Common myeloid progenitor, CD34-positive (primary cell): ENCODE measurements at regions of chr7 and their contacts with region 1.

Region 1: DNA sequence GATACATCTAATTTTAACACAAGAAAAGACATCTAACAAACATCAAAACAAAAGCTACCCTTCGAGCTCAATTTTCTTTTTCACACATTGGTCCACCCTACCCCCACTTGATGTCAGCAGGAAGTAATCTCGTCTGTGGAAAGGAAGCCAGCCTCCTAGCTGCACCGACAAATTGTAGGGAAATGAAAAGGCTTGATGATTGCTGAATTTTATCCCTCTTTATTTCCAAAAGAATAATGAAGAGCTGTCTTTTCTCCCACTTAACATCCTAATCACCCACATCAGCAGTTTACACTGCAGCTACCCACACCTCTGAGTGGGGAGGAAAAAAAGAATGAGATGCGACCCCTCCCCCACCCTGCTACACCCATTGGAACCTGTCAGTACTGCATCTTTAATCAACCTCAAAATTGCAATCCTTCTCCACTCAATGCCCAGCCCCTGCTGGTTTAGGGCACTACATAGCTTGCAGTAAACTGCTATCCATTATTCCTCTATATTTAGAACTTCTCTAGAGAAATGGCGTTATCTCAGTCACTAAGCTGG is 10.6 kb upstream of the CPVL start:
- DNase-seq: peak in 2 of 3 donors; percentile 49 to 59
- H3K4me3 ChIP-seq: peak overlapping the region in 1 of 7 experiments; percentile 10
- H3K27ac ChIP-seq: no peak overlapping the region
- H3K4me1 ChIP-seq: peaks cover 0 to 14% (median 11%) of the 10 kb centered on the region in 4 experiments
- H3K27me3 ChIP-seq: no peaks in the 10 kb centered on the region

Region 2: DNA sequence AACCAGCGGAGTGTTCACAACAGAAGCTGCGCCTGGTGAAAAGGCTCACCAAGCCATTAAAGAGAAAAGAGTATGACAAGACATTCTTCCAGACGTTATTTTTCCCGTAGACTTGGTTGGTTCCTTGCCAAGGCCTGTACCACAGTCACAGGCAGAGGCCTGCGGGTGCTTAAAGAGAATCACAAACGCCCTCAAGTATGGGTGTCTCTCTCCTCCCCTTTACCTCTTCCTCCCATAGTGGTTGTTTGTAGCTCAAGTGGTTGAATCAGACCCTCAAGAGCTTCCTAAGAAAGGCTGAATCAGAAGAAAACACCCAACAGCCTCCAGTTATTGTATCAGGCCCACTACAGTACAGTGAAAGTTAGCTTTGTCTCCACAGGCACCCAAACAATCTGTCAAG is 575.6 kb before region 1 on chr7:
- CTCF ChIA-PET with region 1: no interaction called
- POLR2A ChIA-PET with region 1: no interaction called
- DNase-seq: no peak
- H3K4me3 ChIP-seq: no peak overlapping the region
- H3K27ac ChIP-seq: no peak overlapping the region
- H3K4me1 ChIP-seq: peaks cover 0 to 4% (median 0%) of the 10 kb centered on the region in 4 experiments
- H3K27me3 ChIP-seq: no peaks in the 10 kb centered on the region

Region 3: GRCh38 chr7:28768628-28769027 is 388.4 kb before region 1 on chr7:
- CTCF ChIA-PET with region 1: no interaction called
- POLR2A ChIA-PET with region 1: no interaction called
- DNase-seq: no peak
- H3K4me3 ChIP-seq: no peak overlapping the region
- H3K27ac ChIP-seq: no peak overlapping the region
- H3K4me1 ChIP-seq: no peaks in the 10 kb centered on the region
- H3K27me3 ChIP-seq: no peaks in the 10 kb centered on the region

Region 4: GRCh38 chr7:29146057-29146706 is 10.8 kb before region 1 on chr7 and contains the start of gene CPVL:
- CTCF ChIA-PET with region 1: interaction called, 11 read pairs
- POLR2A ChIA-PET with region 1: no interaction called
- DNase-seq: peak; percentile 50 to 70 (median 59)
- H3K4me3 ChIP-seq: peak within 1 kb of the TSS; percentile 11 to 82 (median 67)
- H3K27ac ChIP-seq: peak within 1 kb of the TSS in 1 of 2 experiments; percentile 20
- H3K4me1 ChIP-seq: peaks cover 0 to 31% (median 15%) of the 10 kb centered on the region in 4 experiments
- H3K27me3 ChIP-seq: peaks cover 0 to 26% (median 2%) of the 10 kb centered on the region in 5 experiments

Region 5: GRCh38 chr7:29177963-29178600 is 21.1 kb after region 1 on chr7:
- CTCF ChIA-PET with region 1: no interaction called
- POLR2A ChIA-PET with region 1: no interaction called
- DNase-seq: peak; percentile 74 to 90 (median 83)
- H3K4me3 ChIP-seq: peak overlapping the region in 2 of 7 experiments; percentile 35 to 37
- H3K27ac ChIP-seq: no peak overlapping the region
- H3K4me1 ChIP-seq: peaks cover 0 to 9% (median 8%) of the 10 kb centered on the region in 4 experiments
- H3K27me3 ChIP-seq: no peaks in the 10 kb centered on the region